Ovary (tissue), 10 donors: ENCODE measurements at regions of chr5 and their contacts with region 1.

Region 1: GRCh38 chr5:150783422-150783928 is 4.9 kb downstream of the SMIM3 start:
- DNase-seq: peak; percentile 50 to 76 (median 63)
- H3K4me3 ChIP-seq: no peak overlapping the region
- H3K27ac ChIP-seq: peak overlapping the region; percentile 66 to 89
- H3K4me1 ChIP-seq: peaks cover 23% of the 10 kb centered on the region
- H3K27me3 ChIP-seq: no peaks in the 10 kb centered on the region
- CTCF ChIP-seq: no peak
- EP300 ChIP-seq: no peak
- POLR2A ChIP-seq: no peak

Region 2: DNA sequence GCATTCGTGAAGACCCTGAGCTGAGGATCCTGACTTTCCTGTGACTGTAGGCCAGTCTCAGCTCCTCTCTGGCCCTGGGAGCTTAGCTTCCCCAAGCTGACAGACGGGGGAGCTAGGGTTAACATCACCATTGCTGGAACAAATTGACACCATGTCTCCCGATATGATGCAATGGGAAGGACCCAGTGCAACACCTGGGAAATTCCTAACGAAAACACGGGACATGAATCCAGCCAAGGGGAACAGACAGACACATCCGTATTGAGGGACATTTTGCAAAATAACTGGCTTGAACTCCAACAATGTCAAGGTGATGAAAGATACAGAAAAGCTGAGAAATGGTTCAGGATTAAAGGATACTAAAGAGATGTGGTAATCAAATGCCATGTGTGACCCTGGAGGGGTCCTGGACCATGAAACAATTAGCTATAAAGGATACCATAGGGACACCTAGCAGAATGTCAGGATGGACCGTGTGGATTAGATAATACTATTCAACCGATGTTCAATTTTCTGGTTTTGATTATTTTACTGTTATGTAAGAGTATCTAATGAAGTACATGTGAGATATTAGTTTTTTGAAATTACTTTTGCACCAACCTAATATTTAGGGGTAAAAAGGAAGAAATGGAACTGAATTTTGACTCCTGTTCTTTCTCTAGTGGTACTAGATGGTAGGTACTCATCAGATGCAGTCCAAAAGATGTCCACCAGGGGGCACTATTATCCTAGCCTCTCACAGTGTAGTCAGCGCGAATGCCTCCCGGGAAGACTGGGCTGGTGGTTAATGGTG is 222.9 kb before region 1 on chr5:
- intact Hi-C with region 1: loop called in 1 of 4 experiments (anchors 10 kb)
- DNase-seq: peak; percentile 64 to 95 (median 83)
- H3K4me3 ChIP-seq: no peak overlapping the region
- H3K27ac ChIP-seq: no peak overlapping the region
- H3K4me1 ChIP-seq: no peaks in the 10 kb centered on the region
- H3K27me3 ChIP-seq: no peaks in the 10 kb centered on the region
- CTCF ChIP-seq: peak; percentile 86 to 94 (median 90)
- EP300 ChIP-seq: no peak
- POLR2A ChIP-seq: no peak

Region 3: DNA sequence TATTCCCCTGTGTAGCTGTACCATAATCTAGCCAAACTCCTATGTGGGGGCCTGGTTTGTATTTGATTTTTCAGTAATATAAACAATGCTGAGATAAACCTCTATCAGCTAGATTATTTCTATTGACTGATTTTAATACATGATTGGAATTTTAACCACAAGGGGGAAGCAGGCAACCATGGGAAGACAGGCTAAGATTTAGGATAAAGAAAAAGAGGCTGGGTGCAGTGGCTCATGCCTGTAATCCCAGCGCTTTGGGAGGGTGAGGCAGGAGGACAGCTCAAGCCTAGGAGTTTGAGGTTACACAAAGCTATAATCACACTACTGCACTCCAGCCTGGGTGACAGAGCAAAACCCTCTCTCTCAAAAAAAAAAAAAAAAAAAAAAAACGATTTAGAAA is 218.8 kb after region 1 on chr5:
- intact Hi-C with region 1: no loop called
- DNase-seq: peak in 1 of 5 donors; percentile 60
- H3K4me3 ChIP-seq: no peak overlapping the region
- H3K27ac ChIP-seq: no peak overlapping the region
- H3K4me1 ChIP-seq: peaks cover 24% of the 10 kb centered on the region
- H3K27me3 ChIP-seq: no peaks in the 10 kb centered on the region
- CTCF ChIP-seq: peak; percentile 58 to 85 (median 84)
- EP300 ChIP-seq: no peak
- POLR2A ChIP-seq: no peak